ENCODE measurements at regions of chr7 and their contacts with region 1.

Region 1: DNA sequence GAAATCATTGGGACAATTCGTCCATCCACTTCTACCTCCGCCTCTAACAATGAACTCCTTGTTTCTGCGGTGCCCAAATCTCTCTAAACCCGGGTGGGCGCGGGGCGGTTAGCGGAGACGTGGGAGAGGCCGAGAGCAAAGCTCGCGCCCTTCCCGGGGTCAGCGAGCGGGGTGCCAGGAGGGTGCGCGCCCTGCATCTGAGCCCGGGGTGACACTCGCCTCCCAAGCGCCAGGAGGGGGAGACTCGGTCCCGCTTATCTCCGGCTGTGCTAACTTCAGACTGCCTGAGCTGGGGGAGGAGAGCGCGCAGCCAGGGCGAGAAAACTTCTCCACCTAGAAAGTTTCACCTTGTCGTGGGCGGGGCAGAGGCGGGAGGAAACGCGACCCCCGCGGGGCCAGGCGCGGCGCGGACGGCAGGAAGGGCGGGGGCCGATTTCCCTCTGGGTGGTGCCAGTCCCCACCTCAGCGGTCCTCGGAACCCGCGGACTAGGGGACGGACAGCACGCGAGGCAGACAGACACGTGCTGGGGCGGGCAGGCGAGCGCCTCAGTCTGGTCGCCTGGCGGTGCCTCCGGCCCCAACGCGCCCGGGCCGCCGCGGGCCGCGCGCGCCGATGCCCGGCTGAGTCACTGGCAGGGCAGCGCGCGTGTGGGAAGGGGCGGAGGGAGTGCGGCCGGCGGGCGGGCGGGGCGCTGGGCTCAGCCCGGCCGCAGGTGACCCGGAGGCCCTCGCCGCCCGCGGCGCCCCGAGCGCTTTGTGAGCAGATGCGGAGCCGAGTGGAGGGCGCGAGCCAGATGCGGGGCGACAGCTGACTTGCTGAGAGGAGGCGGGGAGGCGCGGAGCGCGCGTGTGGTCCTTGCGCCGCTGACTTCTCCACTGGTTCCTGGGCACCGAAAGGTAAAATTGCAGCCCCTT is at the start of gene MET:
- DNase-seq: peak; percentile 72
- ATAC-seq: peak; percentile 93
- H3K4me3 ChIP-seq: peak within 1 kb of the TSS; percentile 69
- H3K27ac ChIP-seq: peak within 1 kb of the TSS; percentile 78
- H3K4me1 ChIP-seq: peaks cover 5% of the 10 kb centered on the region
- H3K27me3 ChIP-seq: no peaks in the 10 kb centered on the region
- CTCF ChIP-seq: peak; percentile 68
- POLR2A ChIP-seq: peak; percentile 50; the same call in 1 of the 2 replicates
- RAD21 ChIP-seq: peak; percentile 82
- total RNA-seq, gene MET: 68.0 and 84.6 TPM in 2 replicates

Region 2: DNA sequence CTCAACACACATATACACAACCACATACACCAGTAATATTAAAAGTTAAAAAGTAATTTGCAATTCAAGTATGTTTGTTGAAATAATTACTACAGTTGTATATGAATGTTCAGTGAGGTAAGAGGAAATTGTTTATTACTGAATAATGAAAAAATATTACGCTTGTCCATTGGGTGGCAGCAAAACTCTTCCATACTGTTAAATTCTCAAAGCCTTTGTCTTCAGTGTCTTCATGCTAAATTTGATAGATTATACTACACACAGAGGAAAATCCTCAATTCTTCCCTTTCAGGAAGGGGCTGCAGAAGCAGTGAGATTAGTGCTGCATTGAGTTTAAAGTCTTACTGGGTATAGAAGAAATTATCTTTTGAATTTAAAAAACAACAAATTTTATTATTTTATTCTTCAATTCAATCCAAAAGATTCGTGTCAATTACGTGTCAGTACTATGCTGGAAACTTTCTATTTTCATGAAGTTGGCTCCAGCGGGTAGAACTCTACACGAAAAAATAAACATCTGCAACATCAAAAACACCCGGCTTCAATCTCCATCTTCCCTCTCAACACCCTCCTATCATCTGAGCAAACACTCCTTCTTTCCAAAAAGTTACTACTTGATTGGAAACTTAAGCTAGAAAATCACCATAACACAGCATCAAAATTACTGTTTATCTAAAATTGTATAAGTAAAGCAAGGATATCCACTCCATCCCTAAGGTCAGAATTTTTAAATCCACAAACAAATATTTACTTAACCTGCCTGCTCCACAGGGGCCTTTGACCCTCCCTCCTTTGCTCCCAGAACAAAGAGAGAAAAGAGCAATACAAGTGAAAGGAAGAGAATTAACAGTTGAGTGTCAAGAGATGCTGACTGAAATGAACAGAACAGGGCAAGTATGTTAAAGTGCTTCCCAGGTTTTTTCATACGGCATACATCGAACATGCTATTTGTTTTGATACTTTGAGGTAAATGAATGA is 498.6 kb before region 1 on chr7:
- CTCF ChIA-PET with region 1: no interaction called
- POLR2A ChIA-PET with region 1: no interaction called
- dilution Hi-C with region 1: no loop called
- in situ Hi-C with region 1: no loop called
- intact Hi-C with region 1: loop called (anchors 5 kb)
- DNase-seq: peak; percentile 69
- ATAC-seq: peak; percentile 31
- H3K4me3 ChIP-seq: no peak overlapping the region
- H3K27ac ChIP-seq: no peak overlapping the region
- H3K4me1 ChIP-seq: peaks cover 15% of the 10 kb centered on the region
- H3K27me3 ChIP-seq: no peaks in the 10 kb centered on the region
- CTCF ChIP-seq: peak; percentile 71
- POLR2A ChIP-seq: no peak
- RAD21 ChIP-seq: peak; percentile 87

Region 3: DNA sequence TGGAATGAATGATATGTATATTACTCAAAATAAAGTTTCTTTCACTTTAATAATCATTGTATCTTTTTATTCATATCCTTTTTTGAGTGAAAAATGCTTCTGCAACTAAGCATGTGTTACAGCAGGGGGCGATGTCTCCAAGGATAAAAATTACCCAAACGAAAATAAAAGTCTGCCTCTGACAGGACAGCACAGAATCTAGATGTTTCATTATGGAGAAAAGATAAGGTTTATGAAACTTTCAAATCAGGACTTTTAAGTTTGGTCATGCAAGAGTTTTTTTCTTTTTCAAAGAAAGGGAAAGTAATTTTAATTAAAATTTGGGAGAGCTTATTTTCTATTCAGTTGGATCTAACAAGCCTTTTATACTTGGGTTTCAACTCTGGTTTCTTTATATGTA is 413.2 kb before region 1 on chr7:
- CTCF ChIA-PET with region 1: no interaction called
- POLR2A ChIA-PET with region 1: no interaction called
- dilution Hi-C with region 1: no loop called
- in situ Hi-C with region 1: no loop called
- intact Hi-C with region 1: loop called (anchors 5 kb)
- DNase-seq: peak; percentile 79
- ATAC-seq: peak; percentile 75
- H3K4me3 ChIP-seq: no peak overlapping the region
- H3K27ac ChIP-seq: peak overlapping the region; percentile 49; the same call in 1 of the 2 replicates
- H3K4me1 ChIP-seq: peaks cover 11% of the 10 kb centered on the region; the same call in 1 of the 2 replicates
- H3K27me3 ChIP-seq: no peaks in the 10 kb centered on the region
- CTCF ChIP-seq: peak; percentile 91
- POLR2A ChIP-seq: 0 out of 2 replicates have a peak, but pooled peaks have one; percentile 39
- RAD21 ChIP-seq: peak; percentile 95

Region 4: DNA sequence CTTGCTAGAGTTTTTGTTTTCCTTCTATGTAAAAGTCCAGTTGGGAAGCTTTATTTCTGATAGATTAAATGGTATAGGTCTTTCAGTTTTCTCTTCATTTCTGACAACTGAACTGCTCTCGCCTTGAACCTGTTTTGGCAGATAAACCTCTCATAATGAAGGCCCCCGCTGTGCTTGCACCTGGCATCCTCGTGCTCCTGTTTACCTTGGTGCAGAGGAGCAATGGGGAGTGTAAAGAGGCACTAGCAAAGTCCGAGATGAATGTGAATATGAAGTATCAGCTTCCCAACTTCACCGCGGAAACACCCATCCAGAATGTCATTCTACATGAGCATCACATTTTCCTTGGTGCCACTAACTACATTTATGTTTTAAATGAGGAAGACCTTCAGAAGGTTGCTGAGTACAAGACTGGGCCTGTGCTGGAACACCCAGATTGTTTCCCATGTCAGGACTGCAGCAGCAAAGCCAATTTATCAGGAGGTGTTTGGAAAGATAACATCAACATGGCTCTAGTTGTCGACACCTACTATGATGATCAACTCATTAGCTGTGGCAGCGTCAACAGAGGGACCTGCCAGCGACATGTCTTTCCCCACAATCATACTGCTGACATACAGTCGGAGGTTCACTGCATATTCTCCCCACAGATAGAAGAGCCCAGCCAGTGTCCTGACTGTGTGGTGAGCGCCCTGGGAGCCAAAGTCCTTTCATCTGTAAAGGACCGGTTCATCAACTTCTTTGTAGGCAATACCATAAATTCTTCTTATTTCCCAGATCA is 27.2 kb after region 1 on chr7:
- CTCF ChIA-PET with region 1: no interaction called
- POLR2A ChIA-PET with region 1: no interaction called
- dilution Hi-C with region 1: no loop called
- in situ Hi-C with region 1: no loop called
- intact Hi-C with region 1: no loop called
- DNase-seq: no peak
- ATAC-seq: no peak
- H3K4me3 ChIP-seq: no peak overlapping the region
- H3K27ac ChIP-seq: no peak overlapping the region
- H3K4me1 ChIP-seq: no peaks in the 10 kb centered on the region; the same call in 1 of the 2 replicates
- H3K27me3 ChIP-seq: no peaks in the 10 kb centered on the region
- CTCF ChIP-seq: no peak
- POLR2A ChIP-seq: no peak
- RAD21 ChIP-seq: no peak

Region 5: GRCh38 chr7:116715077-116715476 is 43.1 kb after region 1 on chr7:
- CTCF ChIA-PET with region 1: interaction called, 4 read pairs
- POLR2A ChIA-PET with region 1: no interaction called
- dilution Hi-C with region 1: no loop called
- in situ Hi-C with region 1: no loop called
- intact Hi-C with region 1: loop called (anchors 5 kb)
- DNase-seq: peak; percentile 19
- ATAC-seq: no peak
- H3K4me3 ChIP-seq: no peak overlapping the region
- H3K27ac ChIP-seq: no peak overlapping the region
- H3K4me1 ChIP-seq: peaks cover 6% of the 10 kb centered on the region
- H3K27me3 ChIP-seq: no peaks in the 10 kb centered on the region
- CTCF ChIP-seq: 0 out of 2 replicates have a peak, but pooled peaks have one; percentile 21
- POLR2A ChIP-seq: no peak
- RAD21 ChIP-seq: no peak